Activated T-helper 2 cell treated with anti-CD3 and anti-CD28 coated beads, Interferon-gamma antibody, Interleukin-2, Interleukin-4, amounts not matched to agents 10 μg/mL and 5 μg/mL and 100 μg/mL, durations not matched to agents 14 hours and 24 hours and 36 hours (primary cell): ENCODE measurements at regions of chr7 and their contacts with region 1.

Region 1: DNA sequence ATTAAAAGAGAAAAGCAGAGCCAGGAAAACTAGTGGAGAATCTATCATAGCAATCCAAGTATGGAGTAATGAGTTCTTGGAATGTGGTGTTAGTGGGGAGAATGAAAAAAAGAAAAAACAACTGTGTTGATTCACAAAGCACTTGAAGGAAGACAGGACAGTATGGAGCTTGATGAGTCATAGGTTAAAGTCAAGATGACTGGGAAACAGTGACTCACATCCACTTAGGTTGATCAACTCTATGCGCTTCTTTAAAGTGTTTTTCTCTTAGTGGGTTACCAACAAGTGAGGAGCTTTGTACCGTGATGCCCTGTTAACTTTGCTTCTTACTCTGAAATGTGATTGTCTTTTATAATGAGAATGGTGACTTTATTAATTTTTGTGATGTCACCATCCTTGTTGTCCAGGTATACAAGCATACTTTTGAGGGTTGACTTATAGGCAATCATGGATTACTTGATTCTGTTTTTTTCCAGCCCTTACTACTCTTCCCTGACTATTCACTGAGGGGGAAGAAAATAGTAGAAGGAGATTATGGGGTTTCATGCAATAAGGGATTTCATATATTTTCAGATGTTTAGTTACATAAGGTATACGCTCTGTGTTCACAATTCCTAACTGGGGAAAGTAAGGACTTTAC is 32.1 kb upstream of the MDFIC start:
- DNase-seq: no peak
- H3K4me3 Mint-ChIP-seq: no peak overlapping the region
- H3K27ac Mint-ChIP-seq: peak overlapping the region; percentile 84
- H3K4me1 Mint-ChIP-seq: peaks cover 40% of the 10 kb centered on the region
- H3K27me3 Mint-ChIP-seq: no peaks in the 10 kb centered on the region

Region 2: GRCh38 chr7:114922016-114922651 is 32.4 kb after region 1 on chr7 and contains the start of gene MDFIC:
- intact Hi-C with region 1: loop called (anchors 1 kb)
- DNase-seq: peak; percentile 55
- H3K4me3 Mint-ChIP-seq: peak within 1 kb of the TSS; percentile 94
- H3K27ac Mint-ChIP-seq: peak within 1 kb of the TSS; percentile 98
- H3K4me1 Mint-ChIP-seq: peaks cover 57% of the 10 kb centered on the region
- H3K27me3 Mint-ChIP-seq: no peaks in the 10 kb centered on the region
- total RNA-seq, gene MDFIC: 119 and 121 TPM in 2 replicates